MCF 10A (cell line): ENCODE measurements at regions of chr2 and their contacts with region 1.

Region 1: GRCh38 chr2:74440378-74441169 is 1.2 kb downstream of the RTKN start:
- DNase-seq: peak; percentile 82
- H3K4me3 Mint-ChIP-seq: peak overlapping the region; percentile 78
- H3K27ac Mint-ChIP-seq: peak overlapping the region; percentile 80
- H3K4me1 Mint-ChIP-seq: peaks cover 15% of the 10 kb centered on the region
- H3K27me3 Mint-ChIP-seq: no peaks in the 10 kb centered on the region
- CTCF ChIP-seq: no peak

Region 2: DNA sequence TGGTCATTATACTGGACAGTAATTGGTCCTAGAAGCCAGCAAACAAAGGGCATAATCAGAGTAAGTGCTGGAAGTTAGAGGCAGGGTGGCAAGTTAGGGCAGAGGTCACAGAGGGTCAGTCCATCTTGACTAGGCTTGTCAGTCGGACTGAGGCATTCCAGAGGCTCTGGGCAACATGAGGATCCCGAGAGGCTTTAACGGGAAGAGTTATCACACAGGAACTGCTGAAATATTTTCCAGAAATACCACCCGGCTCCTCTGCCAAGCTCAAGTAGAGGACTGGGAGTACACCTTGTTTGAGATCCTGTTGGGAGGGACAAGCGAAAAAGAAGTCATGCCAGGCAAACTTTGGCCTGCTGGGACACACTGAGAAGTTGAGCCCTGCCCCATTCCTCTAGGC is 32.9 kb before region 1 on chr2:
- CTCF ChIA-PET with region 1: no interaction called
- POLR2A ChIA-PET with region 1: no interaction called
- intact Hi-C with region 1: no loop called
- DNase-seq: no peak
- H3K4me3 Mint-ChIP-seq: no peak overlapping the region
- H3K27ac Mint-ChIP-seq: no peak overlapping the region
- H3K4me1 Mint-ChIP-seq: peaks cover 7% of the 10 kb centered on the region
- H3K27me3 Mint-ChIP-seq: no peaks in the 10 kb centered on the region
- CTCF ChIP-seq: no peak

Region 3: GRCh38 chr2:74421221-74421870 is 19.2 kb before region 1 on chr2 and contains the starts of genes C2orf81 and WDR54:
- CTCF ChIA-PET with region 1: interaction called, 3 read pairs
- POLR2A ChIA-PET with region 1: interaction called, 38 read pairs
- intact Hi-C with region 1: no loop called
- DNase-seq: peak; percentile 78
- H3K4me3 Mint-ChIP-seq: peak within 1 kb of the TSS; percentile 87
- H3K27ac Mint-ChIP-seq: peak within 1 kb of the TSS; percentile 82
- H3K4me1 Mint-ChIP-seq: peaks cover 33% of the 10 kb centered on the region
- H3K27me3 Mint-ChIP-seq: no peaks in the 10 kb centered on the region
- CTCF ChIP-seq: no peak
- total RNA-seq, gene C2orf81: 4.3 and 5.6 TPM in 2 replicates
- total RNA-seq, gene WDR54: 16.4 and 19.9 TPM in 2 replicates

Region 4: GRCh38 chr2:74507145-74507925 is 66.8 kb after region 1 on chr2 and contains the start of gene PCGF1:
- CTCF ChIA-PET with region 1: no interaction called
- POLR2A ChIA-PET with region 1: interaction called, 12 read pairs
- intact Hi-C with region 1: no loop called
- DNase-seq: peak; percentile 98
- H3K4me3 Mint-ChIP-seq: peak within 1 kb of the TSS; percentile 88
- H3K27ac Mint-ChIP-seq: peak within 1 kb of the TSS; percentile 98
- H3K4me1 Mint-ChIP-seq: peaks cover 28% of the 10 kb centered on the region
- H3K27me3 Mint-ChIP-seq: no peaks in the 10 kb centered on the region
- CTCF ChIP-seq: no peak
- total RNA-seq, gene PCGF1: 37.5 and 41.6 TPM in 2 replicates

Region 5: DNA sequence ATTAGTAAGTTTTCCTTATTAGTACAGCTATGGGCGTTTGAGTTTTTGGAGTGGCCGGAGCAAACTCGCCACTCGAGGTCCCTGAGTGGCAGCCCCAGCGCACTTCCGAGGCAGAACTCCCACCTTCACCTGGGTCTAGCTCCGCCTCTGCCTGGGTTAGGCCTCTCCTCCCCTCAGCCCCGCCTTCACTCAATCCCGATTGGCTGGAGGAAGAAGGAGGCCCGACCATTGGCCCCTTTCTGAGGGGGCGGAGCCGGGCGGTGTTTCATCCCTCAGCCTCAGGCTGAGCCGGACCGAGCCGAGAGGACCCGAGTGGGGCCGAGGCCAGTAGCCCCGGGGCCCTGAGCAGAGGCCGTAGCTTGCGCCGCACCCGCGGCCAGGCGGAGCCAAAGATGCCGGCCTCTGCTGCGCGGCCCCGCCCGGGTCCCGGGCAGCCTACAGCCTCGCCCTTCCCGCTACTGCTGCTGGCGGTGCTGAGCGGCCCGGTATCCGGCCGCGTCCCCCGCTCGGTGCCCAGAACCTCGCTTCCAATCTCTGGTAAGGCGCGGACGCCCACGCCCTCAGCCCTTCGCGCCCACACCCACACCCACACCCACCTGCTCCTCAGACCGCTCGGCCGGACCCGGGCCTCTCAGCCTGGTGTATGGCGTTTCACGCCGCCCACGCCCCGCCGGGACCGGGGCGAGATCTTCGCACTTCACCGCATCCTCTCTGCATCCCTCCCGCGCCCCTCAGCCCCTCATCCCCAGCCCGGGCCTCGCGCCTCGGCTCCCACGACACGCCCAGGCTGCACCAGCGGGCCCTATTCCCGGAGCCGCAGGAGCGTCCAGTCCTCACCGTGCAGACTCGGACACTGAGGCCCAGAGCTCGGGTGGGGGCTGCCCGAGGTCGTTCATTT is 213.7 kb after region 1 on chr2 and contains the start of gene SEMA4F:
- CTCF ChIA-PET with region 1: no interaction called
- POLR2A ChIA-PET with region 1: no interaction called
- intact Hi-C with region 1: no loop called
- DNase-seq: peak; percentile 98
- H3K4me3 Mint-ChIP-seq: peak within 1 kb of the TSS; percentile 77
- H3K27ac Mint-ChIP-seq: peak within 1 kb of the TSS; percentile 20
- H3K4me1 Mint-ChIP-seq: peaks cover 12% of the 10 kb centered on the region
- H3K27me3 Mint-ChIP-seq: no peaks in the 10 kb centered on the region
- CTCF ChIP-seq: no peak
- total RNA-seq, gene SEMA4F: 5.2 and 7.0 TPM in 2 replicates

Region 6: GRCh38 chr2:74849228-74849892 is 408.8 kb after region 1 on chr2:
- CTCF ChIA-PET with region 1: no interaction called
- POLR2A ChIA-PET with region 1: no interaction called
- intact Hi-C with region 1: no loop called
- DNase-seq: peak; percentile 66
- H3K4me3 Mint-ChIP-seq: peak overlapping the region; percentile 19
- H3K27ac Mint-ChIP-seq: peak overlapping the region; percentile 52
- H3K4me1 Mint-ChIP-seq: peaks cover 54% of the 10 kb centered on the region
- H3K27me3 Mint-ChIP-seq: no peaks in the 10 kb centered on the region
- CTCF ChIP-seq: no peak